Right cardiac atrium (tissue), 5 donors: ENCODE measurements at regions of chr9 and their contacts with region 1.

Region 1: DNA sequence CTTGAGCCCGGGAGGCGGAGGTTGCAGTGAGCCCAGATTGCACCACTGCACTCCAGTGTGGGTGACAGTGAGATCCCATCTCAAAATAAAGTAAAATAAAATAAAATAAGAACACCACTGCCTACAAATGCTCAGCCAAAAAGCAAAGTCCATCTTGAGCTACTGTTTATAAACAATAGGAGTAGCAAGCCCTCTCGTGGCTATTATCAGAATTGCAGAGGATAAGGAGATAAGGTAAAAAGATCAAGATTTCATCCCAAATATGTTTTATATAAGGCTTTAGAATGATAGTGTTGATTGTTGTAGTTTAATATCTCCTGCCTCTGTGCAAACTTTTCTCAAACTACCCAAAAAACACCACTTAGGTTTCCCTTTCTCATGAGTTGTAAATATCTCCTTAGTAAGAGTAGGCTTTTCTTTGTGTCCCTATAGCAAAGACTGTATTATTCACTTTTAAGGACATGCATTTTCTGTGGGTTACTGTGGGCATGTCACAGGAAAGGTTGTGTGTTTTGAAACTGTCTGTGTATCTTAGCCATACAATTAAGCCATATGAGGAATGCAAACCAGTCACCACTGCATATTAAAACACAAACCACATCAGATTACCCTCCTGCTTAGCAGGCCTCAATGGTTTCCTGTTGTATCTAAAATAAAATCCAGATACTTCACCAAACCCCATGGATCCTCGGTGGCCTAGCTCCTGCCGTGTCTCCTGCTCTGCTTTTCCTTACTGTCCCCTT is 31.8 kb upstream of the CKS2 start:
- DNase-seq: no peak
- ATAC-seq: no peak
- H3K4me3 ChIP-seq: no peak overlapping the region
- H3K27ac ChIP-seq: no peak overlapping the region
- H3K4me1 ChIP-seq: no peaks in the 10 kb centered on the region
- H3K27me3 ChIP-seq: no peaks in the 10 kb centered on the region

Region 2: GRCh38 chr9:88583901-88584596 is 695.1 kb before region 1 on chr9:
- intact Hi-C with region 1: loop called in 2 of 4 experiments (anchors 10 kb)
- DNase-seq: no peak
- ATAC-seq: peak; percentile 24 to 75
- H3K4me3 ChIP-seq: no peak overlapping the region
- H3K27ac ChIP-seq: no peak overlapping the region
- H3K4me1 ChIP-seq: no peaks in the 10 kb centered on the region
- H3K27me3 ChIP-seq: no peaks in the 10 kb centered on the region

Region 3: GRCh38 chr9:88905506-88905905 is 373.7 kb before region 1 on chr9:
- intact Hi-C with region 1: no loop called
- DNase-seq: no peak
- ATAC-seq: no peak
- H3K4me3 ChIP-seq: no peak overlapping the region
- H3K27ac ChIP-seq: no peak overlapping the region
- H3K4me1 ChIP-seq: no peaks in the 10 kb centered on the region
- H3K27me3 ChIP-seq: no peaks in the 10 kb centered on the region

Region 4: GRCh38 chr9:89351584-89352300 is 72.6 kb after region 1 on chr9:
- intact Hi-C with region 1: no loop called
- DNase-seq: no peak
- ATAC-seq: peak; percentile 9 to 34
- H3K4me3 ChIP-seq: no peak overlapping the region
- H3K27ac ChIP-seq: peak overlapping the region; percentile 19
- H3K4me1 ChIP-seq: peaks cover 16% of the 10 kb centered on the region
- H3K27me3 ChIP-seq: no peaks in the 10 kb centered on the region